ENCODE measurements at regions of chr12 and their contacts with region 1.

Region 1: GRCh38 chr12:104381731-104382480 is 74.8 kb upstream of the CHST11 start:
- DNase-seq: peak; percentile 62
- H3K4me3 ChIP-seq: no peak overlapping the region
- H3K27ac ChIP-seq: no peak overlapping the region
- H3K4me1 ChIP-seq: no peaks in the 10 kb centered on the region
- H3K27me3 ChIP-seq: no peaks in the 10 kb centered on the region
- CTCF ChIP-seq: peak; percentile 93 to 98

Region 2: DNA sequence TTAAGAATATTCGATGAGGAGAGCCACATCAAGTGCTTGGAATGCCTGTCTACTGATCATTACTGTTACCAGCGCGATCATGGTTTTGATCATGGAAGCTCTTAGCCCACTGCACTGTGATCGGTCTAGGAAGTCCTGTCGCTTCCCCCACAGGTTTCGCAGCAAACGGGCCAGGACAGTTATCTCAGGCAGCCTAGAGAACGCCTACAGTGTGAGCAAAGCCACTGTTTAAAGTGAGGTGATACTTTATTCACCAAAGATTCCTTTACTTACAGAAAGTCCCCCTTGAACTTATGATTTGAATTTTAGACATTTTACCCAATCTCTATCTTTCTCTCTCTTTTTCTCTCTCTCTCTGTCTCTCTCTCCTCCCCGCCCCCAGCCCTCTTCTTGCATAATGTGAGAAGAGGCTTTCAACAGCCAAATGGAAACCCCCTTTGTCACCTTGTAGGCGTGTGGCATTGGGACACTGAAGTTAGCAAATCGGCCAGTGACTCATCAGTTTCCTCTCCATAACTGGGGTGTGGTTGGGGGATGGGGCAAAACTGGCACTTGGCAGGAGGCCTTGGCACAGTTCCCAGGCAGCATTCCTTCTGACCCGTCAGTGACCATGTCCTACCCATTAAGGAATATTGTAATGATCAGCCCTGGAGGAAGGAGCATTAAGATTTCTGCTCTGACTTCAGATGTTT is 289.6 kb after region 1 on chr12:
- CTCF ChIA-PET with region 1: no interaction called
- dilution Hi-C with region 1: no loop called
- in situ Hi-C with region 1: no loop called
- intact Hi-C with region 1: loop called (anchors 10 kb)
- DNase-seq: peak; percentile 96
- H3K4me3 ChIP-seq: no peak overlapping the region
- H3K27ac ChIP-seq: peak overlapping the region; percentile 55
- H3K4me1 ChIP-seq: peaks cover 52% of the 10 kb centered on the region
- H3K27me3 ChIP-seq: no peaks in the 10 kb centered on the region
- CTCF ChIP-seq: no peak

Region 3: DNA sequence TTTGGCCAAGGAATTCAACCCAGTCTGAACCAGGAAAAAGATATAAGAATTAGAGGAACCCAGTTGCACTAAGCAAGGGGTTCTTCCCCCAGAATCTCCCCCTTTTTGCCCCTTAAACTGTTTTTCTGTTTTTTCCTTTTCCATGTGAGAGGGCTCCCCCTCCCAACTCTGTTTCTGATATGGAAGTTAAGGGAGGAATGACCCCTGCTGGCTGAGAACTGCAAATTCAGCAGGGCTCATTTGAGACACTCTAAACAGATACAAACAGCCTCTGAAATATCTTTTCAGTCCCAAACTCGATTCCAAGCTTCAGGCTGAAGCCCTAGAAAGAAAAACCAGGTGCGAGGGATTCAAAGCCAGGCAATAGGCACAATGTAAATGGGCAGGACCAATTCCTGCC is 443.5 kb after region 1 on chr12:
- CTCF ChIA-PET with region 1: no interaction called
- dilution Hi-C with region 1: no loop called
- in situ Hi-C with region 1: no loop called
- intact Hi-C with region 1: loop called (anchors 1 kb)
- DNase-seq: peak; percentile 14
- H3K4me3 ChIP-seq: no peak overlapping the region
- H3K27ac ChIP-seq: no peak overlapping the region
- H3K4me1 ChIP-seq: no peaks in the 10 kb centered on the region
- H3K27me3 ChIP-seq: no peaks in the 10 kb centered on the region
- CTCF ChIP-seq: peak; percentile 26 to 42

Region 4: GRCh38 chr12:104877123-104877705 is 495.3 kb after region 1 on chr12:
- CTCF ChIA-PET with region 1: no interaction called
- dilution Hi-C with region 1: no loop called
- in situ Hi-C with region 1: loop called (anchors 10 to 25 kb)
- intact Hi-C with region 1: loop called (anchors 1 kb)
- DNase-seq: peak; percentile 19
- H3K4me3 ChIP-seq: no peak overlapping the region
- H3K27ac ChIP-seq: no peak overlapping the region
- H3K4me1 ChIP-seq: no peaks in the 10 kb centered on the region
- H3K27me3 ChIP-seq: no peaks in the 10 kb centered on the region
- CTCF ChIP-seq: peak; percentile 56 to 74

Region 5: GRCh38 chr12:105100998-105101397 is 719.1 kb after region 1 on chr12:
- CTCF ChIA-PET with region 1: no interaction called
- dilution Hi-C with region 1: no loop called
- in situ Hi-C with region 1: no loop called
- intact Hi-C with region 1: loop called (anchors 1 kb)
- DNase-seq: no peak
- H3K4me3 ChIP-seq: no peak overlapping the region
- H3K27ac ChIP-seq: no peak overlapping the region
- H3K4me1 ChIP-seq: peaks cover 5% of the 10 kb centered on the region
- H3K27me3 ChIP-seq: no peaks in the 10 kb centered on the region
- CTCF ChIP-seq: no peak